CD14-positive monocyte (primary cell): ENCODE measurements at regions of chr18 and their contacts with region 1.

Region 1: GRCh38 chr18:31217038-31217849 is 54.6 kb upstream of the DSC1 start:
- DNase-seq: no peak
- H3K4me3 ChIP-seq: no peak overlapping the region
- H3K4me3 Mint-ChIP-seq: no peak overlapping the region
- H3K27ac ChIP-seq: no peak overlapping the region
- H3K27ac Mint-ChIP-seq: peak overlapping the region in 1 of 7 donors; percentile 32
- H3K4me1 ChIP-seq: no peaks in the 10 kb centered on the region
- H3K4me1 Mint-ChIP-seq: peaks cover 6% of the 10 kb centered on the region
- H3K27me3 ChIP-seq: no peaks in the 10 kb centered on the region
- H3K27me3 Mint-ChIP-seq: peaks cover 0 to 2% (median 0%) of the 10 kb centered on the region in 3 donors
- CTCF ChIP-seq: no peak

Region 2: DNA sequence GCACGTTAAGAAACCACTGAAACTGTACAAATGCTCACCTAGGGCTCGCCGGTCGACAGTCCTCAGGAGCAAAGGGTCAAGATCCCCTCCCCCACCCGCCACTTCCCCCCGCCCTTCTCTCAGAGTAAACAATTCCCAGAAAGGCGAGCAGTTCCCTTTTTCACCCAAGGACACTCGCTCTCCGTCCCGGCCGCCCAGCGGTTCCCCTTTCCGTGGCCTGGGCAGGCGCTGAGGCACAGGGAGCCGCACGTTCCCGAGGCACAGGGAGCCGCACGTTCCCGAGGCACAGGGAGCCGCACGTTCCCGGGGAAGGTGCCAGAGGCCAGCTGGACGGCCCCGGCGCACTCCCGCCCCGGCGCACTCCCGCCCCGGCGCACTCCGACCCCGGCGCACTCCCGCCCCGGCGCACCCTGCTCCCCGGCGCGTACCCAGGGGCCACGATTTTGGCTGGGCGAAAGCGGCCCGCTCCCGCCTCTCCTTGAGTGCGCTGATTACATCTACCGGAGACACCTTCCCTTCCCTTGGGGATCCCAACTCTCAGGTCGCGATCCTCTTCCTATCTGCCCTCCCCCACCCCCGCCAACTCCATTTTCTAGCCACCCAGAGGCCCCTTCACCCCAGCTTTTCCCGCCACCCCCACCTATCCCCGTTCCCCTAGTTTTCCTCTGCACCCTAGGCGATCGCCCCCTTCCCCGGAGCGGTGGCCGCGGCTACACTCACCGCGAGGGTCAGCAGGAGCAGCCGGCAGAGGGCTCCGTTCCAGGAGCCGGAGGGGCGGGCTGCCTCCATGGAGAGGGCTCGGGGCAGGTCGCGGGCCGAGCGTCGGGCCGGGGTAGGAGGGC is 115.8 kb before region 1 on chr18:
- intact Hi-C with region 1: loop called in 1 of 2 experiments (anchors 10 kb)
- DNase-seq: peak; percentile 54 to 81 (median 79)
- H3K4me3 ChIP-seq: peak overlapping the region; percentile 46 to 90 (median 83)
- H3K4me3 Mint-ChIP-seq: peak overlapping the region; percentile 90 to 92
- H3K27ac ChIP-seq: peak overlapping the region; percentile 35 to 67
- H3K27ac Mint-ChIP-seq: peak overlapping the region in 5 of 7 donors; percentile 70 to 80 (median 76)
- H3K4me1 ChIP-seq: peaks cover 17 to 20% of the 10 kb centered on the region in 2 donors
- H3K4me1 Mint-ChIP-seq: peaks cover 24% of the 10 kb centered on the region
- H3K27me3 ChIP-seq: peaks cover 22 to 28% of the 10 kb centered on the region in 2 donors
- H3K27me3 Mint-ChIP-seq: peaks cover 28 to 41% (median 40%) of the 10 kb centered on the region in 3 donors
- CTCF ChIP-seq: no peak